GM13976 (cell line): ENCODE measurements at regions of chr15 and their contacts with region 1.

Region 1: GRCh38 chr15:39920510-39921273 is 626 bp upstream of the GPR176 start:
- DNase-seq: peak; percentile 91
- CTCF ChIP-seq: no peak

Region 2: DNA sequence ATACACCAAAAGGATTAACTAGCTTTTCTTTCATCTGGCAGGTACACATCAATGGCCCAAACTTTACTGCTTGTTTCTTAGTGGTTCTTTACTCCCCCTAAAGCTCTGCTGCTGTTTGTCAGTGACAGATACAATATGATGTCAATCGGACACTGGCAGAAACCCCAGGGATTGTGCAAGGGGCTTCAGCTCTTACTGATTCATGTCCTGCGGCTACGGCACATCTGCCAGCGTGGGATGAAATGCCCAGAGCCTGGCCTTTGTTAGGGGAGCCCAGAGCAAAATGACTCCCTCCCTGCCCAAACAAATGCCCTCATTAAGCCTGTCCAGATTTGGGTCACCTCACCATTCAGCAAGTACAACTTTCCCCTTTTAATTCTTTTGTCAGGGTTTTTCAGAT is 90.0 kb after region 1 on chr15:
- in situ Hi-C with region 1: loop called (anchors 25 kb)
- DNase-seq: no peak
- CTCF ChIP-seq: no peak